ENCODE measurements at regions of chr13 and their contacts with region 1.

Region 1: GRCh38 chr13:40388617-40389016 is 277.8 kb downstream of the FOXO1 start:
- DNase-seq: peak; percentile 89
- ATAC-seq: peak; percentile 98
- H3K4me3 Mint-ChIP-seq: peak overlapping the region; percentile 71
- H3K27ac Mint-ChIP-seq: peak overlapping the region; percentile 95
- H3K4me1 Mint-ChIP-seq: peaks cover 44% of the 10 kb centered on the region
- H3K27me3 Mint-ChIP-seq: no peaks in the 10 kb centered on the region

Region 2: DNA sequence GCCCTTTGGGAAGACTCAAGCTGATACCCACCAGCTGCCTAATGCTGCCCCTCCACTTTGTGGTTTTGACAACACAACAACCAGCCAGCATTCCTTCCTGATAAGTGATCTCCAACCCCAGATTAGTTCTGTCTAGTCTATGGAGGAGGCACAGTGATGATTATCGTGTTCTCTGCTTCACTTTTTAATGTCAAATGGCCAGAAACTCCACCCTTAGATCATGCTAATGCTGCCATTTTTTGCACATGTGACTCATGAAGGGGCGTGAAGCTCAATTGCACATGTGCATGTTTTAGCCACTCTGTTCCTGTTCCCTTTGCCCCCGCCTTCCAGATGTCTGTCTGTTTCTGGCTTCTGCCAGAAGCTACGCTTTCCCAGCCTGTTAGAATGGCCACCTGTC is 533.4 kb before region 1 on chr13:
- CTCF ChIA-PET with region 1: no interaction called
- POLR2A ChIA-PET with region 1: no interaction called
- intact Hi-C with region 1: no loop called
- DNase-seq: no peak
- ATAC-seq: no peak
- H3K4me3 Mint-ChIP-seq: no peak overlapping the region
- H3K27ac Mint-ChIP-seq: no peak overlapping the region
- H3K4me1 Mint-ChIP-seq: no peaks in the 10 kb centered on the region
- H3K27me3 Mint-ChIP-seq: peaks cover 5% of the 10 kb centered on the region

Region 3: GRCh38 chr13:40069173-40070044 is 319.2 kb before region 1 on chr13:
- CTCF ChIA-PET with region 1: no interaction called
- POLR2A ChIA-PET with region 1: no interaction called
- intact Hi-C with region 1: loop called in 1 of 2 experiments (anchors 5 kb)
- DNase-seq: peak; percentile 86
- ATAC-seq: peak; percentile 93
- H3K4me3 Mint-ChIP-seq: peak overlapping the region; percentile 26
- H3K27ac Mint-ChIP-seq: peak overlapping the region; percentile 80
- H3K4me1 Mint-ChIP-seq: peaks cover 31% of the 10 kb centered on the region
- H3K27me3 Mint-ChIP-seq: no peaks in the 10 kb centered on the region

Region 4: DNA sequence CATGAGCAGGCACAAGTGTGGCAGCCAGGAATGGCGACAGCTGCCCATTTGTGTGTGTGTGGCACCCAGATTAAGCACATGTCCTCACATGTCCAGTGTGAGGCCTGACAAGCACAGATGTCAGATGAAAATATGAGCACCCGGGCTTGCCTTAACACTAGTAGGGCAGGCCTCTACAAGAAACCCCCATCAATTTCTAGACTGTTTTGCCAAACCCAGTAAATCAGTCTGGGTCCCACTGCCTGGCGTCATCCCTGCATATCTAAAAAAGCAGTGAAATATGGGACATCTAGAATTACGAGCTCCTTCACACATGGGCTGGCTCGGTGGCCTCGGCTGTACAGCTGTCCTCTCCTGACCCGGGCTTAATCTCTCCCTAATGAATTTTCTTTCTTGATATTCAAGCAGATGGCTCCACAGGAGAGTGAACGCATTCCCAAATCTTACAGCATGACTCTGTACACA is 154.9 kb before region 1 on chr13:
- CTCF ChIA-PET with region 1: no interaction called
- POLR2A ChIA-PET with region 1: no interaction called
- intact Hi-C with region 1: no loop called
- DNase-seq: no peak
- ATAC-seq: no peak
- H3K4me3 Mint-ChIP-seq: no peak overlapping the region
- H3K27ac Mint-ChIP-seq: no peak overlapping the region
- H3K4me1 Mint-ChIP-seq: peaks cover 23% of the 10 kb centered on the region
- H3K27me3 Mint-ChIP-seq: no peaks in the 10 kb centered on the region

Region 5: GRCh38 chr13:40315416-40316064 is 73.1 kb before region 1 on chr13:
- CTCF ChIA-PET with region 1: no interaction called
- POLR2A ChIA-PET with region 1: no interaction called
- intact Hi-C with region 1: loop called in 1 of 2 experiments (anchors 2 kb)
- DNase-seq: peak; percentile 79
- ATAC-seq: peak; percentile 82
- H3K4me3 Mint-ChIP-seq: peak overlapping the region; percentile 46
- H3K27ac Mint-ChIP-seq: peak overlapping the region; percentile 63
- H3K4me1 Mint-ChIP-seq: peaks cover 69% of the 10 kb centered on the region
- H3K27me3 Mint-ChIP-seq: no peaks in the 10 kb centered on the region

Region 6: DNA sequence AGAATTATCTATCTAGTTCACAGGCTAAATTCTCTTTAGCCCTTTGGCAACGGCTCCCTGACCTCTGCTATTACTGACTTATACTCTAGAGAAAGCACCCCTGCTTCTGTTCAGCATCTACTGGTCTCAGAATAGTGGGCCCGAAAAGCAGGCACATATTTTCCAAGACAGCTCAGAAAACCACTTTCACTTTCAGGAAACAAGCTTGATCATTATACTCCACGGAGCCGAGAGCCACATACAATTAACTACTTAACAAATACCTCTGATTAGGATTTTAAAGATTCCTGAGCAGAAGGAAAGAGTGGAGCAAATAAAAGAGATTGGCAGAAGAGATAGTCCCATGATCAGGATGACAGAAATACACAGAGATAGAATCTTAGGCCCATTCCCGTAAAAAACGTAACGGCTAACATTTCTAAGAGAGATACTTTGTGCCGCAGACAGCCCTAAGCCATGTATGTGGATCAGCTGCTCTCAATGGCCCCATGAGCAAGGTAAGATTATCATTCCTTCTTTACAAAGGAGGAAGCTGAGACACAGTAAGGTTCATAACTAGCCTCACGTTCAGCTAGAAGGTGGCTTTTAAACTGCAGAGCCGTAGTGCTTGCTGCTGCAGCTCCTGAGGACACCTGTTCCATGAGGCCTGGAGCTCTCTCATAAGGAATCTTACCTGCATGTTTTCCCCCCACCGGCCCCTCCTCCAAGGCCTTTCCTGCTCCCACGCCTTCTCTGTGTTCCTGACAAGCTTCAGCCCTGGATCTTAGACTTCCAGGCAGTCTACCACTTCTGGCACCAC is 50.6 kb after region 1 on chr13:
- CTCF ChIA-PET with region 1: no interaction called
- POLR2A ChIA-PET with region 1: no interaction called
- intact Hi-C with region 1: loop called in 1 of 2 experiments (anchors 5 kb)
- DNase-seq: peak; percentile 53
- ATAC-seq: peak; percentile 84
- H3K4me3 Mint-ChIP-seq: peak overlapping the region; percentile 54
- H3K27ac Mint-ChIP-seq: peak overlapping the region; percentile 88
- H3K4me1 Mint-ChIP-seq: peaks cover 38% of the 10 kb centered on the region
- H3K27me3 Mint-ChIP-seq: no peaks in the 10 kb centered on the region

Region 7: DNA sequence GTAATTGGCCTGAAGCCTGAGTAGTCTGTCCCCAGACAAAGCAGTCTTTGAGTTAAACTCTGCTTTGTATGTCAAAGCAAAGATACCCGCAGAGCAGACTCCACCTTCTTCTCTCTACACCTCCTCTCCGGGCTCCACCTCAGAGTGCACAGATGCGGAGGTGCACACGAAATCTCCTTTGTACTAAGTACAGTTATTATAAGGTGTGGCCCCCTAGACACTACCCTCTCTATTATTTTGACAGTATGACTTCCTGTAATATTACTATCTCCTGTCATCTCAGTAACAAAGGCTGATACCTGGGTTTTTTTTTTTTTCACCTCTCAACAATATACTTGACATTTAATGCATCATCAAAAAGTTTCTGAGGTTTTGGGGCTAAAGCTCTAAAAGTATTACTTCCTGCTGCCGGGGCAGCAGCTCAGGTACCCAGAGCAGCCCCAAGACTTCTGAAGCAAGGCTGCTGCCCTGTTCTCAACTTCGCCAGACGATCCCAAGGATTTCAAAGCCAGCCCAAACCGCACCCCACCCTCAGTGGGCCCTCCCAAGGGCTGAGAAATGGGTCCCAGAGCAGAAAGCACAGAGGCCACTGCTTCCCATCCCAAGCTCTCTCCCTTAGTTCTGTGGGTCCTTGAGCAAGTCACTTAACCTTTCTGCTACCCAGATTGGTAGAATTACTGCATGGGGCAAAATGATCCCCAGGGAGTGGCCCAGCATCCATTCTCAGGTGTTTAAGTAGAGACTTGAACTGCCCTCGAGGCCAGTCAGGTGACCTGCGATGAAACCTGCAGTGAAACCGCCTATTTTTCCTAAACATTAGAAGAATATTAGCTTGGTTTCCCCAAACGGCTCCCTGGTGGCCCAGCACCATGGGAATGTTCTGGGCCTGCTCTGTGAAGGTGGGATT is 97.2 kb after region 1 on chr13:
- CTCF ChIA-PET with region 1: no interaction called
- POLR2A ChIA-PET with region 1: no interaction called
- intact Hi-C with region 1: loop called in 1 of 2 experiments (anchors 2 kb)
- DNase-seq: peak; percentile 80
- ATAC-seq: peak; percentile 94
- H3K4me3 Mint-ChIP-seq: peak overlapping the region; percentile 20
- H3K27ac Mint-ChIP-seq: peak overlapping the region; percentile 93
- H3K4me1 Mint-ChIP-seq: peaks cover 86% of the 10 kb centered on the region
- H3K27me3 Mint-ChIP-seq: no peaks in the 10 kb centered on the region

Measured in activated CD4-positive, alpha-beta T cell treated with anti-CD3 and anti-CD28 coated beads for 36 hours (primary cell).